Activated naive CD4-positive, alpha-beta T cell treated with anti-CD3 and anti-CD28 coated beads for 36 hours (primary cell): ENCODE measurements at regions of chr13 and their contacts with region 1.

Region 1: DNA sequence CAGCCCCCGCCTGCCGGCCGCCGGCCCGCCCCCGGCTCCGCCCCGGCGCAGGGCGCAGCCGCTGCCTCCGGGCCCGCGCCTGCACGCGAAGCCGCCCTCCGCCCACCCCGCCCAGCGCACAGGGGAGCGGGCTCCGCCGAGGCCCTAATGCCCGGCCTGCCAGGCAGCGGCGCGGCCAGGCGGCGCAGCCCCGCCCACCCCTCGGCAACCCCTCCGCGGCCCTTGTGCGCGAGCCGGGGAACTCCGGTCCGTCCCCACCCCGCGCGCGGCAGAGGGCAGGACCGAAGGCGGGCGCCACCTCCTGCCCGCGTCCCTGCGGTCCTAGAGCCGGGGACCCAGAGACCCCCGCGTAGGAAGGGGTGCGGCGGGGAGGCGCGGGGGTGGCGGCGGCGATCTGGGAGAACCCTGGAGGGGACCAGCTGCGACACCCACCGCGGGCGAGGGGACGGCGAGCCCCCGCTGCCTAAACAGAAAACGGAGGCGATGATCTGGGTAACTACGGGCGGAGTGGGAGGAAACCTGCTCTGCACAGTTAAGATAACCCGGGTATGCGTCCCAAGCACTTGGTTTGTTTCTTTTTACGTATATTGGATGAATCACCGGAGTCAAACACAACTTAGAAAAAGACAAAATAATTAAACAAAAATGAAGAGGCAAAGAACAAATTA is 350 bp upstream of the USP12 start:
- DNase-seq: peak; percentile 79
- H3K4me3 Mint-ChIP-seq: peak overlapping the region; percentile 81
- H3K27ac Mint-ChIP-seq: peak overlapping the region; percentile 81
- H3K4me1 Mint-ChIP-seq: peaks cover 61% of the 10 kb centered on the region
- H3K27me3 Mint-ChIP-seq: no peaks in the 10 kb centered on the region

Region 2: DNA sequence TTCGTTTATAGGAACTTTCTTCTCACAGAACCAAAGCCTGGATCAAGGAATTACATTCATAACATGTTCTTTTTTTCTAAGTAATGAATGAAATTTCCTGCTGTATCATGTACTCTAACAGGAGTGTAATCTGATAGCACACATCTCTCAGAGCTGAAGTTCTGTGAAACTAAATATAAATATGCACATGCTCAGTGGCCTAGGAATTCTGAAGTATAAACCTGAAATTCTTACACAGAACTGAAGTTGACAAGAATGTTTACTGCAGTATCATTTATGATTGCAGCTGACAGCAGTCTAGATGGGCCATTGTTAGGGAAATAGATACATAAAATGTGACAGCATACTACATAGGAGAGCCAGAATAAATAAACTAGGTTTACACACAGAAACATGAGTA is 54.8 kb before region 1 on chr13:
- CTCF ChIA-PET with region 1: no interaction called
- intact Hi-C with region 1: loop called (anchors 10 kb)
- DNase-seq: no peak
- H3K4me3 Mint-ChIP-seq: no peak overlapping the region
- H3K27ac Mint-ChIP-seq: no peak overlapping the region
- H3K4me1 Mint-ChIP-seq: peaks cover 52% of the 10 kb centered on the region
- H3K27me3 Mint-ChIP-seq: no peaks in the 10 kb centered on the region

Region 3: GRCh38 chr13:27147530-27148170 is 24.3 kb before region 1 on chr13:
- CTCF ChIA-PET with region 1: interaction called, 3 read pairs
- intact Hi-C with region 1: loop called (anchors 1 kb)
- DNase-seq: no peak
- H3K4me3 Mint-ChIP-seq: peak overlapping the region; percentile 56
- H3K27ac Mint-ChIP-seq: peak overlapping the region; percentile 93
- H3K4me1 Mint-ChIP-seq: peaks cover 81% of the 10 kb centered on the region
- H3K27me3 Mint-ChIP-seq: no peaks in the 10 kb centered on the region

Region 4: GRCh38 chr13:27353166-27353583 is 181.2 kb after region 1 on chr13:
- CTCF ChIA-PET with region 1: interaction called, 3 read pairs
- intact Hi-C with region 1: loop called (anchors 1 kb)
- DNase-seq: peak; percentile 68
- H3K4me3 Mint-ChIP-seq: no peak overlapping the region
- H3K27ac Mint-ChIP-seq: no peak overlapping the region
- H3K4me1 Mint-ChIP-seq: peaks cover 12% of the 10 kb centered on the region
- H3K27me3 Mint-ChIP-seq: peaks cover 9% of the 10 kb centered on the region